Posterior vena cava (tissue), 2 donors: ENCODE measurements at regions of chr1 and their contacts with region 1.

Region 1: GRCh38 chr1:110235834-110236682 is 25.9 kb downstream of the KCNC4 start:
- DNase-seq: peak; percentile 4

Region 2: DNA sequence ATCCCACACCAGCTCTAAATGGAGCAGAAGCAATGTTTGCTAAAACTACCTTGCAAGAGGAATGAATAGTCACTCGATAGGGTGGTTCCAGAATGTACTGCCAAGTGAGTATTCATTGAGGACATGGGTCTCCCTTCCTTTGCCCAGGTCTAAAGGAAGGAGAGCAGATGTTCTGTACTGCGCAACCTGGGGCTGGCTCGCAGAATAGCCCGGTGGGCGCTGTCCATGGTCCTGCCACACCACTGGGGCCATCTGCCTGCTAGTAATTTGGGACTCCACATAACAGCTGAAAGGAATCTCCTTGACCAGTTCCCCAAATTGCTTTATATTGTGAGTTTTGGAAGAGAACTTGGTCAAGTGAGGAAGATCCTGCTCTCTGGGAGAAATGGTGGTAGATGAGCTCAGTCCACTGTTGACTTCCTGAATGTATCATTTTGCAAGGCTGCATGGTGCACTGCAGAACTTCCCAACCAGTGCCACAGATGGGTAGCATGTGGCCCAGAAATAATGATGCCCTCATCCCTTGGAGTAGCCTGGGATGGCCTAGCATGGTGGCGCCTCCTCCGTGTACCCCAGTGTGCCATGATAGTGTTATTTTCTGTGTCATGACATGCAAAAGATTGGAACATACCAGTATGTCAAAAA is 80.1 kb before region 1 on chr1:
- intact Hi-C with region 1: no loop called
- DNase-seq: no peak

Region 3: GRCh38 chr1:110272045-110272444 is 36.0 kb after region 1 on chr1:
- intact Hi-C with region 1: loop called in 1 of 2 experiments (anchors 1 kb)
- DNase-seq: no peak

Region 4: GRCh38 chr1:110312188-110313121 is 76.4 kb after region 1 on chr1:
- intact Hi-C with region 1: loop called in 1 of 2 experiments (anchors 1 kb)
- DNase-seq: peak; percentile 94

Region 5: DNA sequence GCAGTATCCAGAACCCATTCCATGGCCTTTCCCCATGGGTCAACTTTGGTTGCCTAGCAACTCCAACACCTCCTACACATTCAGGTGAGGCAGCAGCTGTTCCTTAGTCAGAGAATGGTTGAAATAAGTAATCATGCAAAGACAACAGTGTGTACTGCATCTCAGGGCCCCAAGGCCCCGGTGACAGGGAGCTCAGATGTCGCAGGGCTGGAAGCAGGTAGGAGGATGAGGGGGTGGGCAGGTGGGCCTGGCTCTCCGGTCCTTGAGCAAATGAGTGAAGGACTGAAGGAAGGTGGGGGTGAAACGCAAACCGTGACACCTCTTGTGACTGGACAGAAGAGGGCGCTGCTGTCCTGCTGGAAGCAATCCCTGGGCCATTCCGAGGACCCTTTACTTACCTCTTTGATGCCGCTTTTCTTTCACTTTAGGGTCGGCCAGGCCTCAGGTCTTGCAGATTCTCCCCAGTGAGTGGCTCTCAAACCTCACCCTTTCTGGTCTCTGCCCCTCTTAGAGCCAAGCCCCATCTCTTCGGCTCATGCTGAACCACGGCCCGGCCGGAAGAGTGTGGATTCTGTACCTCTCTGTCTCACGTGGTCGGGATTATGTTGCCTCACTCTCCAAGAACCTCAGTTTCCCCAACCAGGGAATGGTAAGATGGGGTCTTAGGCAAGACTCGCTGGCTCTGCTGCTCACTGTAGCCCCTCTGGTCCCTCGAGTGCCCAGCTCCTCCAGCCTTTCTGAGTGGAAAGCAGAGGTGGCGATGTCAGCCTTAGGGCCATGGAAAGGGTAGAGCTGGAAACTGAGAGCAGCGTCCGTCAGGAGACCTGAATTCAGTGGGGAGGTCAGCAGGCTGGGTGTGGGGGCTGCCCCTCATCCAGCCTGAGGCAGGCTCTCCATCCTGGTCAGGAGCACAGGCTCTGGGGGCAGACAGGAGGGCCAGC is 288.5 kb after region 1 on chr1:
- intact Hi-C with region 1: no loop called
- DNase-seq: no peak